Head of caudate nucleus (tissue), 42 donors: ENCODE measurements at regions of chr6 and their contacts with region 1.

Region 1: GRCh38 chr6:79713701-79714322 is 82.7 kb downstream of the SH3BGRL2 start:
- DNase-seq: peak in 31 of 42 donors; percentile 26 to 82 (median 53)

Region 2: GRCh38 chr6:78561015-78561414 is 1152.8 kb before region 1 on chr6:
- intact Hi-C with region 1: no loop called
- DNase-seq: no peak

Region 3: GRCh38 chr6:79570129-79571029 is 143.4 kb before region 1 on chr6:
- intact Hi-C with region 1: loop called (anchors 10 kb)
- DNase-seq: peak in 12 of 42 donors; percentile 14 to 57 (median 34)

Region 4: DNA sequence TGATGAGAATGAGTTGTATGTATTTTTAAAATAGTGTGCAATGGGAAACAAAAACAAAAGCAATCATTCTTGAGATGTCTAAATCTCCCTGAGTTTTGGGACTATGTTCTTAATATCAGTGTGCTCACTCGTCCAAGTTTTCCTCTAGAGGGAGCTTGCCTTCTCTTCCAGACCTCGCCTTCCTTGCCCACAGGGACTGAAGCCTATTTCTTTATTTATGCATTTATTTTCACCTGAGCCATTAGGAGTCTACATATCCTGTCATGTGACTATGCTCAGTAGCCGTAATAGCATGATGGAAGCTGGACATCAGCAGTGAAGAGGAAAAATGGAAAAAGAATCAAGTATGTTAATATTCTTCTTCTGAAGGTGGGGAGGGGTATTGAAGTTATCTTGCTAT is 48.6 kb after region 1 on chr6:
- intact Hi-C with region 1: no loop called
- DNase-seq: peak in 8 of 42 donors; percentile 12 to 48 (median 22)